ENCODE measurements at regions of chr21 and their contacts with region 1.

Region 1: GRCh38 chr21:15495965-15496364 is 233.8 kb upstream of the USP25 start:
- DNase-seq: no peak
- ATAC-seq: no peak
- H3K4me3 ChIP-seq: no peak overlapping the region
- H3K27ac ChIP-seq: no peak overlapping the region
- H3K4me1 ChIP-seq: no peaks in the 10 kb centered on the region
- H3K27me3 ChIP-seq: no peaks in the 10 kb centered on the region
- CTCF ChIP-seq: no peak

Region 2: DNA sequence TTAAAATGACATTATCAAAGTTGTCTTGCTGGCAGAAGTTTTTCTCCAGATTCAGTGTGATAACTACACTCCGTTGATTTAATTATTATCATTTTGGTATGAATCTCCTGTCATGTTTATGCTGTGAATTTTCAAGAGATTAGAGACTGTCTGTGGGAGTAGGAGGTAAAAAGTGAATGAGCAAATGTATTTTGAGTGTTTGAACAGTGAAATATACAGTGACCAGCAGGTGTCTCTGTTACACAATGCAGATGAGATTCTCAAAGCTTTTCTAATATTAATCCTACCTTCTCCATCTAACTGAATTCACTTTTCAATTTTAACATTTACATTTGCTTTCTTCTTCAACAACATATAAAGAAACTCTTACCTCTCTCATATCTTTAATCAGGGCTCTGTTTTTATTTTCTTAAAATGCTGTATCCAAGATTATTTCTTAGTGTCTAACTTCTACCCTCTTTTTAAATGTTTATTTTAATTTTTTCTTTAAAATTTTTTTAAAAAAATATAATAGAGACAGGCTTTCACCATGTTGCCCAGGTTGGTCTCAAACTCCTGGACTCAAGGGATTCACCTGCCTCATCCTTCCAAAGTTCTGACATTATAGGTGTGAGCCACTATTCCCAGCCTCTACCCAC is 1092.2 kb before region 1 on chr21:
- intact Hi-C with region 1: loop called in 1 of 2 experiments (anchors 10 kb)
- DNase-seq: no peak
- ATAC-seq: peak in 1 of 4 donors; percentile 61
- H3K4me3 ChIP-seq: no peak overlapping the region
- H3K27ac ChIP-seq: no peak overlapping the region
- H3K4me1 ChIP-seq: no peaks in the 10 kb centered on the region
- H3K27me3 ChIP-seq: no peaks in the 10 kb centered on the region
- CTCF ChIP-seq: peak; percentile 54

Region 3: GRCh38 chr21:14850394-14850793 is 645.6 kb before region 1 on chr21:
- intact Hi-C with region 1: loop called in 1 of 2 experiments (anchors 5 kb)
- DNase-seq: no peak
- ATAC-seq: no peak
- H3K4me3 ChIP-seq: no peak overlapping the region
- H3K27ac ChIP-seq: no peak overlapping the region
- H3K4me1 ChIP-seq: no peaks in the 10 kb centered on the region
- H3K27me3 ChIP-seq: no peaks in the 10 kb centered on the region
- CTCF ChIP-seq: no peak

Region 4: DNA sequence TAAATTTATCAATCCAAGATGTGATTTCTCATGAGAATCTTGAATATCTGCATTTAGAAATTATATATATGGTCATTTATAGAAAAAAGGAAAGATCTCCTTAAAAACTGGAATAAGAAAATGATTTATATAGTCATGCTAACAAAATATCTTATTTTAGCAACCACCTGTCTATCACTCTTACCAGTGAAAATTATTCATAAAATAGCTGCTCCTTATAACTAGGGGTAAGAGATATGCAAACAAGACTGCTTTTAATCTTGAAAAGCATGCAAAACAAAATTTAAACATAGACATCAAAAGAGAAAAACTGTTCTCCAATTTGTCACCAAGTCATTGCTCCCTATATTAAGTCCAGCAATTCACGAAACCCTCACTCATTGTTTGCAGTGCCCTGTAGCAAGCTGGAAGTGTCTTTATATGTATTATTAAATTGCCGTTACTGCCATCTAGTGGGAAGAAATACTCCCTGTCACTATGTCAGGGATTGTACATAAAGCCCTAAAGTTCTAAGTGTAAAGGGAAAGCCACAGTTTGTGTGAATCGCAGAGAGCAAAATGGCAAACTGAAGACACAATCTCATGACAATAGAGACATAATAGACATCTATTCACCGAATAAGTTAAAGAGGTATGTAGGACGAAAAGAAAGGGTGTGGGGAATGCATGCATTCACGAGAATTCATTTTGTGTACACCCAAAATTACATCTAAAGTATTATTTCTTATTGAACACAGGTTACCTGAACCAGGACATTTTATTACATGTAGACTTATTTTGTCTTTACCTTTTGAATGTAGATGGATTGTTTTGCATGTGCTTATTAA is 834.3 kb after region 1 on chr21:
- intact Hi-C with region 1: no loop called
- DNase-seq: no peak
- ATAC-seq: peak; percentile 84 to 97 (median 96)
- H3K4me3 ChIP-seq: peak overlapping the region; percentile 23
- H3K27ac ChIP-seq: peak overlapping the region; percentile 0
- H3K4me1 ChIP-seq: peaks cover 8% of the 10 kb centered on the region
- H3K27me3 ChIP-seq: no peaks in the 10 kb centered on the region
- CTCF ChIP-seq: peak; percentile 81

Measured in psoas muscle (tissue), 8 donors.